GM18951 (cell line): ENCODE measurements at regions of chr19 and their contacts with region 1.

Region 1: DNA sequence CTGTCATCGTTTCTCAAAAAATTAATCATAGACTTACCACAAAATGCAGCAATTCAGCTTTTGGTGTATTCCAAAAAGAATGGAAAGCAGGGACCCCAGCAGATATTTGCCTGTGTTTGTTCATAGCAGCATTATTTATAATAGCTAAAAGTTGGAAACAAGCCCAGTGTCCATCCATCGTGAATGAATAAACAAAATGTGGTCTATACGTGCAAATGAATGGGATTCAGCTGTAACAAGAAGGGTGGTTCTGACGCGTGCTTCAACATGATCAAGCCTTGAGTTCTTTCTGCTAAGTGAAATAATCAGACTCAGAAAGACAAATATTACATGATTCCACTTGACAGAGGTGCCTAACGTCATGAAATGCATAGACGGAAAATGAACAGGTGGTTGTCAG is 36.4 kb downstream of the PSG11 start:
- POLR2A ChIP-seq: no peak

Region 2: DNA sequence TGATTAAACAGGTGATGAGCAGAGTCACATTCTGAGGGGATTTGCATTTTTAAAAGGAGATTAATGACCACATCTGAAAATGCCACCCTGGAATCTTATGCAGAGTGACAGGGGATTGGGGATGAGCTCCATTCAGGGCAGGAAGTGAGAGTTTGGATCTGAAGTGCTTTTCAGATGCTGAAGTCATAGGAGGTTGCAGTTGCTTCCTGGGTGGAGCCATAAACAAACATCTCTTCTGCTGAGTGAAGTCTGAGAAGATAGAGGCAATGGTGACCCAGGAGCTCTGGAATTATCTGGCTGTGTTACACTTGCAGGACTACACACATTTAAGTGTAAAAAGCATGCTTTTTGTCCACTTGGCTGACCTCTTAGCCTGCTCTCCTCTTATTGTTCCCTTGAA is 173.0 kb before region 1 on chr19:
- in situ Hi-C with region 1: loop called (anchors 10 kb)
- POLR2A ChIP-seq: no peak